CD8-positive, alpha-beta T cell (primary cell): ENCODE measurements at regions of chr14 and their contacts with region 1.

Region 1: GRCh38 chr14:50830932-50831725 is at the start of gene NIN:
- DNase-seq: peak; percentile 44 to 89 (median 75)
- ATAC-seq: peak; percentile 80
- H3K4me3 ChIP-seq: peak within 1 kb of the TSS; percentile 79 to 86
- H3K4me3 Mint-ChIP-seq: peak within 1 kb of the TSS; percentile 97
- H3K27ac ChIP-seq: peak within 1 kb of the TSS; percentile 76 to 87
- H3K27ac Mint-ChIP-seq: peak within 1 kb of the TSS; percentile 98
- H3K4me1 ChIP-seq: peaks cover 50% of the 10 kb centered on the region
- H3K4me1 Mint-ChIP-seq: peaks cover 68% of the 10 kb centered on the region
- H3K27me3 ChIP-seq: no peaks in the 10 kb centered on the region
- H3K27me3 Mint-ChIP-seq: no peaks in the 10 kb centered on the region
- CTCF ChIP-seq: no peak
- total RNA-seq, gene NIN: 121 to 132 TPM

Region 2: GRCh38 chr14:50778721-50779483 is 52.2 kb before region 1 on chr14:
- CTCF ChIA-PET with region 1: interaction called, 40 read pairs
- POLR2A ChIA-PET with region 1: interaction called, 40 read pairs
- intact Hi-C with region 1: loop called in 1 of 2 experiments (anchors 1 kb)
- DNase-seq: peak in 1 of 9 experiments; percentile 28
- ATAC-seq: peak; percentile 27
- H3K4me3 ChIP-seq: no peak overlapping the region
- H3K4me3 Mint-ChIP-seq: no peak overlapping the region
- H3K27ac ChIP-seq: peak overlapping the region in 1 of 2 experiments; percentile 17
- H3K27ac Mint-ChIP-seq: peak overlapping the region; percentile 80
- H3K4me1 ChIP-seq: peaks cover 57% of the 10 kb centered on the region
- H3K4me1 Mint-ChIP-seq: peaks cover 68% of the 10 kb centered on the region
- H3K27me3 ChIP-seq: no peaks in the 10 kb centered on the region
- H3K27me3 Mint-ChIP-seq: no peaks in the 10 kb centered on the region
- CTCF ChIP-seq: no peak

Region 3: DNA sequence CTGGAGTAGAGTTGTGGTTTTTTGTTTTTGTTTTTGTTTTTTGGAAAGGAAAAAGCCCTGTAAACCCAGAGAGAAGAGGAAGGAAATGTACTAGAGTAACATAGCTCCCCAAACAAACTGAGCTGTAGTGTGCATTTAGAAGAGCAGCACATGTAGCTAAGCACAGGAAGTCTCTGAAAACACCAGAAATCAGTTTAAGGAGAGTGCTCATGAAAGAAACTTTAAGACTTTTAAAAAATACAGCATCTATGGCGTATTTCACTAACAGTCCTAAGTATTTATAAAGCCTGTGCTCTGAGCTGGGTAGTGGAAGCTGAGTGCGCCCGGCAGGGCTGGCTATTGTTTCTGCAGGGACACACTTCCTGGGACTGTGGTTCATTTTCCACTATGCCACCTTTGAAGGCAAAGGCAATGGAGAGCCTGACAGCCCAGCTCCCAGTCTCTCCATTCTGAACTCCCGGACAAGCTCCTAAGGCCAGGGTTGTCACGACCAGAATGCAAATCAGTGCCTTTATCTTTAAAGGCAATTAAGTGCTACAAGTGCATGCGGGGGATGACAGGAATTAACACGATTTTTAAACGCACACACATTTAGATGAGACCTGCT is 45.6 kb before region 1 on chr14:
- CTCF ChIA-PET with region 1: interaction called, 40 read pairs
- POLR2A ChIA-PET with region 1: interaction called, 40 read pairs
- intact Hi-C with region 1: loop called in 1 of 2 experiments (anchors 2 kb)
- DNase-seq: peak in 2 of 9 experiments; percentile 23 to 56
- ATAC-seq: peak; percentile 52
- H3K4me3 ChIP-seq: peak overlapping the region; percentile 3 to 32
- H3K4me3 Mint-ChIP-seq: peak overlapping the region; percentile 74
- H3K27ac ChIP-seq: peak overlapping the region; percentile 32 to 58
- H3K27ac Mint-ChIP-seq: peak overlapping the region; percentile 92
- H3K4me1 ChIP-seq: peaks cover 75% of the 10 kb centered on the region
- H3K4me1 Mint-ChIP-seq: peaks cover 96% of the 10 kb centered on the region
- H3K27me3 ChIP-seq: no peaks in the 10 kb centered on the region
- H3K27me3 Mint-ChIP-seq: no peaks in the 10 kb centered on the region
- CTCF ChIP-seq: no peak

Region 4: GRCh38 chr14:50792051-50792477 is 39.1 kb before region 1 on chr14:
- CTCF ChIA-PET with region 1: interaction called, 40 read pairs
- POLR2A ChIA-PET with region 1: interaction called, 40 read pairs
- intact Hi-C with region 1: loop called in 1 of 2 experiments (anchors 2 kb)
- DNase-seq: peak in 4 of 9 experiments; percentile 18 to 70 (median 50)
- ATAC-seq: peak; percentile 54
- H3K4me3 ChIP-seq: peak overlapping the region; percentile 30 to 39
- H3K4me3 Mint-ChIP-seq: peak overlapping the region; percentile 79
- H3K27ac ChIP-seq: peak overlapping the region; percentile 59 to 75
- H3K27ac Mint-ChIP-seq: peak overlapping the region; percentile 98
- H3K4me1 ChIP-seq: peaks cover 60% of the 10 kb centered on the region
- H3K4me1 Mint-ChIP-seq: peaks cover 95% of the 10 kb centered on the region
- H3K27me3 ChIP-seq: no peaks in the 10 kb centered on the region
- H3K27me3 Mint-ChIP-seq: no peaks in the 10 kb centered on the region
- CTCF ChIP-seq: no peak

Region 5: DNA sequence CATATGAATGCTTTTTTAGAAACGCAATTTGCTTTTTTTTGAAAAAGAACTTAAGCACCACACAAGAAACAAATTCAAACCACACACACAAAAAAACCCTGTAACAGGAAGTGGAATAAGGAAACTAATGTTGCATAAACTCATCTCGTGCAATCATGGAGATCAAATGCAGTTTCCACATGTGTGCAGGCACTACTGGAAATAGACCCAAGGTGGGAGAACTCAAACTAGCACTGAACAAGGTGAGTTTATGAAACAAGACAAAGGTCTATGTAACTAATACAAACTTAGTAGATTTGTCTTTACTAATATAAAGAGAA is 17.6 kb before region 1 on chr14:
- CTCF ChIA-PET with region 1: interaction called, 4 read pairs
- POLR2A ChIA-PET with region 1: interaction called, 7 read pairs
- intact Hi-C with region 1: loop called (anchors 1 to 2 kb)
- DNase-seq: peak in 3 of 9 experiments; percentile 44 to 76 (median 57)
- ATAC-seq: peak; percentile 85
- H3K4me3 ChIP-seq: peak overlapping the region in 1 of 2 experiments; percentile 9
- H3K4me3 Mint-ChIP-seq: peak overlapping the region; percentile 77
- H3K27ac ChIP-seq: peak overlapping the region in 1 of 2 experiments; percentile 44
- H3K27ac Mint-ChIP-seq: peak overlapping the region; percentile 92
- H3K4me1 ChIP-seq: peaks cover 49% of the 10 kb centered on the region
- H3K4me1 Mint-ChIP-seq: peaks cover 69% of the 10 kb centered on the region
- H3K27me3 ChIP-seq: no peaks in the 10 kb centered on the region
- H3K27me3 Mint-ChIP-seq: no peaks in the 10 kb centered on the region
- CTCF ChIP-seq: no peak

Region 6: GRCh38 chr14:51860164-51860824 is 1029.2 kb after region 1 on chr14 and contains the start of gene GNG2:
- CTCF ChIA-PET with region 1: no interaction called
- POLR2A ChIA-PET with region 1: no interaction called
- intact Hi-C with region 1: loop called in 1 of 2 experiments (anchors 10 kb)
- DNase-seq: peak; percentile 71 to 94 (median 83)
- ATAC-seq: peak; percentile 95
- H3K4me3 ChIP-seq: peak within 1 kb of the TSS; percentile 86 to 90
- H3K4me3 Mint-ChIP-seq: peak within 1 kb of the TSS; percentile 98
- H3K27ac ChIP-seq: peak within 1 kb of the TSS; percentile 88
- H3K27ac Mint-ChIP-seq: peak within 1 kb of the TSS; percentile 95
- H3K4me1 ChIP-seq: peaks cover 50% of the 10 kb centered on the region
- H3K4me1 Mint-ChIP-seq: peaks cover 66% of the 10 kb centered on the region
- H3K27me3 ChIP-seq: no peaks in the 10 kb centered on the region
- H3K27me3 Mint-ChIP-seq: no peaks in the 10 kb centered on the region
- CTCF ChIP-seq: no peak
- total RNA-seq, gene GNG2: 166 to 169 TPM